Panc1 (cell line): ENCODE measurements at regions of chr17 and their contacts with region 1.

Region 1: DNA sequence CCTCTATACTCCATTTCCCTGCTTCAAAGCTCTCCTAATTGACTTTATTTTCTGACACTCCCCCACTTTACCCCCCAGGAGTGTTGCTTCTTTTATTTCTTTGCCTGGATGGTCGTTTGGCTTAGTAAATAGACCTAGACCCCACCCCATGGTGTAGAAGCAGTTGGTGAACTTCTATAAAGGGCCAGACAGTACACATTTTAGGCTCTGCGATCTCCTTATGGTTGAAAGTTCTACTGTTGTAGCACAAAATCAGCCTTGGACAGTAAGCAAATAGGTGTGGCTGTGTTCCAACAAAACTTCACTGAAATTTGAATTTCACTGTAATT is 31.9 kb downstream of the ZNF287 start:
- DNase-seq: no peak
- ATAC-seq: no peak
- H3K4me3 ChIP-seq: no peak overlapping the region; a peak in 1 of 4 replicates
- H3K27ac ChIP-seq: no peak overlapping the region
- H3K4me1 ChIP-seq: no peaks in the 10 kb centered on the region; the same call in 1 of the 2 replicates
- H3K27me3 ChIP-seq: no peaks in the 10 kb centered on the region
- CTCF ChIP-seq: peak; percentile 64

Region 2: GRCh38 chr17:16551878-16552636 is 15.0 kb after region 1 on chr17:
- CTCF ChIA-PET with region 1: no interaction called
- POLR2A ChIA-PET with region 1: no interaction called
- in situ Hi-C with region 1: no loop called
- intact Hi-C with region 1: no loop called
- DNase-seq: no peak
- ATAC-seq: no peak
- H3K4me3 ChIP-seq: no peak overlapping the region
- H3K27ac ChIP-seq: no peak overlapping the region
- H3K4me1 ChIP-seq: no peaks in the 10 kb centered on the region
- H3K27me3 ChIP-seq: no peaks in the 10 kb centered on the region
- CTCF ChIP-seq: no peak

Region 3: GRCh38 chr17:16573466-16573865 is 36.4 kb after region 1 on chr17:
- CTCF ChIA-PET with region 1: no interaction called
- POLR2A ChIA-PET with region 1: no interaction called
- in situ Hi-C with region 1: no loop called
- intact Hi-C with region 1: no loop called
- DNase-seq: no peak
- ATAC-seq: no peak
- H3K4me3 ChIP-seq: no peak overlapping the region
- H3K27ac ChIP-seq: no peak overlapping the region
- H3K4me1 ChIP-seq: no peaks in the 10 kb centered on the region
- H3K27me3 ChIP-seq: no peaks in the 10 kb centered on the region
- CTCF ChIP-seq: no peak

Region 4: GRCh38 chr17:16584273-16584995 is 47.3 kb after region 1 on chr17:
- CTCF ChIA-PET with region 1: no interaction called
- POLR2A ChIA-PET with region 1: no interaction called
- in situ Hi-C with region 1: no loop called
- intact Hi-C with region 1: loop called (anchors 5 kb)
- DNase-seq: peak; percentile 55
- ATAC-seq: peak; percentile 97
- H3K4me3 ChIP-seq: peak overlapping the region; percentile 59 to 84
- H3K27ac ChIP-seq: peak overlapping the region; percentile 68
- H3K4me1 ChIP-seq: peaks cover 3% of the 10 kb centered on the region; the same call in 1 of the 2 replicates
- H3K27me3 ChIP-seq: no peaks in the 10 kb centered on the region
- CTCF ChIP-seq: peak; percentile 98

Region 5: DNA sequence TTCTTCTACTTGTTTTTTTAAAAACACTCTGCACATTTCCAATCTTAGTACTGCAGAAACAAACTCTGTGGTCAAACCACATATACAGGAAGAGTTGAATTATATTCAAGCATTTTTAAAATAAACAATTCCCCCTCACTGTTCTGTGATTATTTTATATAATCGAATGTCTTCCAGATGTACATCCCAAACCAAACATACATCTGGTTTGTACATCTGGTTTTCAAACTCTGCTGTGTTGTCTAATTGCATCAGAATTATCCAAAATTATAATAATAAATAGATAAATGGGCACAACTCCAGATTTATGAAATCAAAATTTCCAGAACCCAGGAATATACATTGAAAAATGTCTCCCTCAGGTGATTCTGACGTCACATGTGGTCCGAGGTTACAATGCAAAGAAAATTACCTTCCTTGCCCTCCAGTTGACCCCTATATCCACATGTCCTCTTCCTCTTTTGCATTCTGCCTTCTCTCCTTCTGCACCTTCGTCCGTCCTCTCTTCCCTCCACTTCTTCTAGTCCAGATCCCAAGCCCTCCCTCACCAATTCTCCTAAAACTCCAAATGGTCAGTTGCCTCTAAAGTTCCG is 139.7 kb after region 1 on chr17:
- CTCF ChIA-PET with region 1: no interaction called
- POLR2A ChIA-PET with region 1: no interaction called
- in situ Hi-C with region 1: no loop called
- intact Hi-C with region 1: no loop called
- DNase-seq: no peak
- ATAC-seq: no peak
- H3K4me3 ChIP-seq: no peak overlapping the region
- H3K27ac ChIP-seq: no peak overlapping the region
- H3K4me1 ChIP-seq: no peaks in the 10 kb centered on the region
- H3K27me3 ChIP-seq: no peaks in the 10 kb centered on the region
- CTCF ChIP-seq: no peak

Region 6: GRCh38 chr17:16877102-16877501 is 340.0 kb after region 1 on chr17:
- CTCF ChIA-PET with region 1: no interaction called
- POLR2A ChIA-PET with region 1: no interaction called
- in situ Hi-C with region 1: no loop called
- intact Hi-C with region 1: no loop called
- DNase-seq: no peak
- ATAC-seq: no peak
- H3K4me3 ChIP-seq: no peak overlapping the region
- H3K27ac ChIP-seq: no peak overlapping the region
- H3K4me1 ChIP-seq: no peaks in the 10 kb centered on the region
- H3K27me3 ChIP-seq: no peaks in the 10 kb centered on the region
- CTCF ChIP-seq: no peak